ENCODE measurements at regions of chr19 and their contacts with region 1.

Region 1: DNA sequence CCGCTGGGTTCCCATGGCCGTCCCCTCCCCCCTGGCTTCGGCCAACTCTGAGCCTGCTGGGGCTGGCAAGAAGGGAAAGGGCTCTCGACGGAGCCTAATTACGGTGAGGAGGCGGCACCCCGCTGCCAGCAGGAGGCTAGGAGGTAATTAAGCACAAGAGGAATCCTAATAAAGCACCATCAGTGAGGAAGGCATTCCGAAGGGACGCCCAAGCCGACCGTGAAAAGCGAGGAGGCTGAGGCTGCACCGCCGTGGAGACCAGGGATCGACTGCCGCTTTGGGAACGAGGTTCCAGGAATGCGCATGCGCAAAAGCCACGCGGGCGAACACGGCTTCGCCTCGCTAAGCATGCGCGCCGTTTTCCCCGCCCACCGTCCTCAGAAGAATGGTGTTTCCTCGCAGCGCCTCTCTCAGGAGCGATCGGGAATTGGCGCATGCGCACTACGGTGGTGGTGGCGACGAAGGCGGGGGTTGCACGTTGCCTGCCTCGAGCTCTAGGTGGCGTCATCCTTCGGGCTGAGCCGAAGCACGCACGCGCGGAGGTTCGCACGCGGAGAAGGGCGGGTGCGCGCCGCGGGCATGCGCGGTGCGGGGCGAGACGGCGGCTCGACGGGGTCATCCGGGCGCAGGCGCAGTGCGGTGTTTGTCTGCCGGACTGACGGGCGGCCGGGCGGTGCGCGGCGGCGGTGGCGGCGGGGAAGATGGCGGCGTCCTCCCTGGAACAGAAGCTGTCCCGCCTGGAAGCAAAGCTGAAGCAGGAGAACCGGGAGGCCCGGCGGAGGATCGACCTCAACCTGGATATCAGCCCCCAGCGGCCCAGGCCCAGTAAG is at the start of gene MAP2K7:
- DNase-seq: peak; percentile 100
- ATAC-seq: peak; percentile 83 to 93 (median 88)
- H3K4me3 ChIP-seq: peak within 1 kb of the TSS; percentile 69 to 97 (median 88)
- H3K27ac ChIP-seq: peak within 1 kb of the TSS; percentile 70 to 93 (median 88)
- H3K4me1 ChIP-seq: peaks cover 0 to 51% (median 34%) of the 10 kb centered on the region in 12 donors
- H3K27me3 ChIP-seq: no peaks in the 10 kb centered on the region
- CTCF ChIP-seq: peak; percentile 22 to 88 (median 65)
- POLR2A ChIP-seq: peak in 1 of 2 donors; percentile 67
- total RNA-seq, gene MAP2K7: 11.6 to 26.6 (median 23.5) TPM

Region 2: DNA sequence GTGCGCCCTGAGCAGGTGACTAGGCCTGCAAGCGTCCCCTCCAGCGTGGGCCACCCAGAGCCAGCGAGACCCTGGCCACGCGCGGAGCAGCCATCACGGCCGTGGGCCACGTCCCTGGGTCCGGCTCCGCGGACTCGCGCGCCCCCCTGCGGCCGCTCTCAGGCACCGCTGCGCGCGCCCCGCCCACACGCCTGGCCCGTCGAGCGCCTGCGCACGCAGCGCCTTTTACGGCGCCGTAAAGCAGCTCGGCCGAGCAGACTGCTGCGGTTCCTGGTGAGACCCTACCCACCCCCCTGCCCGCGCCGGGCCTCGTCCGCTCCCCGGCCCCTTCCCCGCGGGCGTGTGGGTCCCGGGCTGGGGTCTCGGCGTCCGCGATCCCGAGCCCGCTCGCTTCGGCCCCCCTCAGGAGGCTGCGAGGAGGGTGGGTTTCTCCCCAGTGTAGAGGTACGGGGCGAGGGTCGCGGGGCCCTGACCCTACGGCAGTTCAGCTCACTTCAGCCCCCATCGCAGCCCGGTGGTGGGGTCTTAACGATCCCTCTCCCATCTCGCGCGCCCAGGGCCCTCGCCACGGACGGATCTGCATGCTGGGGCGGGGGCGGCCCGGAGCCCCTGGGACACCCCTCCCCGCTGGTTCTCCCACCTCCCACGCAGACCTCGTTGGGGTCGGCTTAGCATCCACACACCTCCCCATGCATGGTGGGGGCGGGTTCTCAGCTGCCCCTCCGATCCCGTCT is 222.7 kb before region 1 on chr19 and contains the start of gene TRAPPC5:
- intact Hi-C with region 1: loop called in 1 of 10 experiments (anchors 5 kb)
- DNase-seq: peak; percentile 84 to 94 (median 89)
- ATAC-seq: peak; percentile 52 to 88 (median 85)
- H3K4me3 ChIP-seq: peak within 1 kb of the TSS; percentile 71 to 100 (median 96)
- H3K27ac ChIP-seq: peak within 1 kb of the TSS; percentile 51 to 95 (median 86)
- H3K4me1 ChIP-seq: peaks cover 0 to 35% (median 8%) of the 10 kb centered on the region in 12 donors
- H3K27me3 ChIP-seq: peaks cover 0 to 30% (median 6%) of the 10 kb centered on the region in 9 donors
- CTCF ChIP-seq: peak; percentile 84 to 99 (median 98)
- POLR2A ChIP-seq: peak in 1 of 2 donors; percentile 86
- total RNA-seq, gene TRAPPC5: 65.9 to 124 (median 96.9) TPM

Region 3: GRCh38 chr19:7858109-7858830 is 45.2 kb before region 1 on chr19:
- intact Hi-C with region 1: loop called in 4 of 10 experiments (anchors 2 to 10 kb)
- DNase-seq: no peak
- ATAC-seq: no peak
- H3K4me3 ChIP-seq: no peak overlapping the region
- H3K27ac ChIP-seq: no peak overlapping the region
- H3K4me1 ChIP-seq: peaks cover 0 to 19% (median 12%) of the 10 kb centered on the region in 12 donors
- H3K27me3 ChIP-seq: peaks cover 0 to 18% (median 0%) of the 10 kb centered on the region in 9 donors
- CTCF ChIP-seq: no peak
- POLR2A ChIP-seq: no peak

Region 4: DNA sequence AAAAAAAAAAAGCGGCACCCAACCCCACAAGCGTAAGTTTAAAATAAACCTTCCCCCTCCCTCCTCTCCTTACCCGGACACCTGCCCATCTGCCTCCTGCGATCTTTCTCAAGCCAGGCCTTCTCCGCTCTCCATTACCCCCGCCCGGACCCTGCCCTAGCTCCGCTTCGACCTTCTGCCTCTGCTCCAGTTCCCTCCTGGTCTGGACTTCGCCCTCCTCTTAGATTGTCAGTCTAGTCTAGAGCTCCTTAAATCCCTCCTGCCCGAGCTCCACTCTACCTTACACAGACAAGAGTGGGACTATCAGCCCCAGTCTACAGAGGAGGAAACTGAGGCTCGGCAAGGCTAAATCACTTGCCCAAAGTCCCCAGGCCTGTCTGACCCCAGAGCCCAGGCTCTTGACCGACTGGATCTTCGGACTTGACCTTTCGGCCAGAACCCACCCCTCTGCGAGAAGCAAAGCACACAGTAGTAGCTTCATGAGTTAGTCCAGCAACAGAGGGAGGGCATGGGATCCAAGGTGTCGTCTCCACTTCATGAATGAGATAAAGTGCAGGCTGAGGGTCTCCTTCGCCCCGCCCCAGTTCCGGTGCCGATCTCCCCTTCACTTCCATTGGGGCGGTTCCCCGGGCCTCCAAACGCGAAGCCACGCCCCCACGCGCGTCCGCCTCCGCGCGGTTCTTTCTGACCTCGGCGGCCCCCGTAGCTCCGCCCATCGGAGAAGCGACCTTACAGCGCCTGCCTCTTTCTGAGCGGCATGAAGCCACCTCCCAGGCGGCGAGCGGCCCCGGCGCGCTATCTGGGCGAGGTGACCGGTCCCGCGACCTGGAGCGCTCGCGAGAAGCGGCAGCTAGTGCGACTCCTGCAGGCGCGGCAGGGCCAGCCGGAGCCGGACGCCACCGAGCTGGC is 16.4 kb after region 1 on chr19 and contains the start of gene SNAPC2:
- intact Hi-C with region 1: loop called in 3 of 10 experiments (anchors 1 to 2 kb)
- DNase-seq: peak; percentile 96 to 98 (median 98)
- ATAC-seq: peak; percentile 32 to 75 (median 68)
- H3K4me3 ChIP-seq: peak within 1 kb of the TSS; percentile 52 to 98 (median 79)
- H3K27ac ChIP-seq: peak within 1 kb of the TSS; percentile 70 to 97 (median 90)
- H3K4me1 ChIP-seq: peaks cover 5 to 63% (median 38%) of the 10 kb centered on the region in 12 donors
- H3K27me3 ChIP-seq: peaks cover 16 to 46% (median 32%) of the 10 kb centered on the region in 9 donors
- CTCF ChIP-seq: peak in 2 of 12 donors; percentile 10 to 14
- POLR2A ChIP-seq: peak in 1 of 2 donors; percentile 74
- total RNA-seq, gene SNAPC2: 6.8 to 16.7 (median 9.3) TPM